Endothelial cell of umbilical vein (primary cell): ENCODE measurements at regions of chr16 and their contacts with region 1.

Region 1: DNA sequence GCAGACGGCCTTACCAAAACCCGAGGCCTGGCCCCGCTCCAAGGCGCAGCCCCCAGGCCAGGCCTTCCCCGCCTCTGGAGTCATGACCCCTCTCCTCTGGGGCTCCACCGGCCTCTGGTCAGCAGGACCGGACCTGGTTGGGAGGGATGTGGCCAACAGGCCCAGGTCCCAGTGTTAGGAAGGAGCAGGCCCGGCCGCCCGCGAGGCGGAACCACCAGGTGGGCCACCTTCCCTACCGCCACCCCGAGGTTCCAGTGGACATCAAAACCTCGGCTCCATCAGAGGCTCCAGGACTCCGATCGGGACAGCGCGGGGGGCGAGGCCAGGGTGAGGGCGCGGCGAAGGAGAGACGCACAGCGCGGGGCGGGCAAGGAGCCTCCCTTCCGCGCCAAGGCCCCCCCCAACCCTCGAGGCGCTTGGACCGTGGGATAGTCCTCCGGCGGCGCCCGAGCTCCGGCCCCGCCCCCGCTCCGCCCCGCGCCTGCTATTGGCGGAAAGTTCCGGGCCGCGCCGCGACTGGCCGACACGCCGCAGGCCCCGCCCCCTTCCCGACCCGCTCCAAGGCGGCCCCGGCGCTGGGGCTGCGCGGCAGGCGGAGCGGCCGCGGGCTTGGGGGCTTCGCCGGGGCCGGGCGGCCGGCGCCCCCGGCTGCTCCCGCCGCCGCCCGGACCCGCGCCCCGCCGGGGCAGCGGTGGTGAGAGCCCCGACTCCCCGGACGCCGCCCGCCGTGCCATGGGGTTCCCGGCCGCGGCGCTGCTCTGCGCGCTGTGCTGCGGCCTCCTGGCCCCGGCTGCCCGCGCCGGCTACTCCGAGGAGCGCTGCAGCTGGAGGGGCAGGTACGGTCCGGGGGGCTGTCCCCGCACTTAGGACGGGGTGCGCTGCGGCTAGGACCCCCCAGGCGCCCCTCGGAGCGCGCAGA is at the start of gene METRN:
- DNase-seq: peak; percentile 78
- H3K4me3 ChIP-seq: peak within 1 kb of the TSS; percentile 42 to 58 (median 51)
- H3K27ac ChIP-seq: no peak within 1 kb of the TSS
- H3K4me1 ChIP-seq: peaks cover 10% of the 10 kb centered on the region
- H3K27me3 ChIP-seq: no peaks in the 10 kb centered on the region
- CTCF ChIP-seq: no peak
- POLR2A ChIP-seq: no peak
- total RNA-seq, gene METRN: 14.1 and 16.1 TPM in 2 replicates

Region 2: GRCh38 chr16:621528-622105 is 93.2 kb before region 1 on chr16:
- CTCF ChIA-PET with region 1: no interaction called
- POLR2A ChIA-PET with region 1: no interaction called
- dilution Hi-C with region 1: no loop called
- intact Hi-C with region 1: no loop called
- DNase-seq: no peak
- H3K4me3 ChIP-seq: no peak overlapping the region
- H3K27ac ChIP-seq: no peak overlapping the region
- H3K4me1 ChIP-seq: peaks cover 3% of the 10 kb centered on the region
- H3K27me3 ChIP-seq: no peaks in the 10 kb centered on the region
- CTCF ChIP-seq: no peak
- POLR2A ChIP-seq: no peak

Region 3: GRCh38 chr16:703406-703805 is 11.4 kb before region 1 on chr16:
- CTCF ChIA-PET with region 1: interaction called, 10 read pairs
- POLR2A ChIA-PET with region 1: no interaction called
- dilution Hi-C with region 1: no loop called
- intact Hi-C with region 1: no loop called
- DNase-seq: no peak
- H3K4me3 ChIP-seq: no peak overlapping the region
- H3K27ac ChIP-seq: no peak overlapping the region
- H3K4me1 ChIP-seq: no peaks in the 10 kb centered on the region
- H3K27me3 ChIP-seq: peaks cover 39 to 44% of the 10 kb centered on the region in 2 experiments
- CTCF ChIP-seq: no peak
- POLR2A ChIP-seq: no peak

Region 4: DNA sequence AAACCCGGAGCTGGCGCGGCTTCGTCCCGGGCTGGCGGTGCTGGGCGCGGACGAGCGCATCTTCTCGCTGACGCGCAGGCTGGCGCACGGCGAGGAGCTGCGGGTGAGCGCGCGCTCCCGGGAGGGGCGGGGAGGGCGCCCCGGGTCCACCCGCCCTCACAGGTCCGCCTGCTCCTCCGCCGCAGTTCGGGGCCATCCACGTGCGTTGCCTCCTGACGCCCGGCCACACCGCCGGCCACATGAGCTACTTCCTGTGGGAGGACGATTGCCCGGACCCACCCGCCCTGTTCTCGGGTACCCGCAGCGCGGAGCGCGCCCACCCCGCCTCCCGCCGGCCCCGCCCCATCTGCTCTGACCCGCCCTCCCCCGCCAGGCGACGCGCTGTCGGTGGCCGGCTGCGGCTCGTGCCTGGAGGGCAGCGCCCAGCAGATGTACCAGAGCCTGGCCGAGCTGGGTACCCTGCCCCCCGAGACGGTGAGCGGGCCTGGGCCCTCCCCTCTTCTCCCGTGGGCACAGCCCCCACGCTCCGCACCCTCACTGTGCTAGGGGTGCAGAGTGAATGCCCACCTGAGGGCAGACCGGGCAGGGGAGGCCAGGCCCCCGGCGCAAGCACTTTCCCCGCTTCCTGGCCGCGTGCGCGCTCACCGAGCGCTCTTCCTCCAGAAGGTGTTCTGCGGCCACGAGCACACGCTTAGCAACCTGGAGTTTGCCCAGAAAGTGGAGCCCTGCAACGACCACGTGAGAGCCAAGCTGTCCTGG is 13.5 kb after region 1 on chr16:
- CTCF ChIA-PET with region 1: interaction called, 34 read pairs
- POLR2A ChIA-PET with region 1: no interaction called
- dilution Hi-C with region 1: no loop called
- intact Hi-C with region 1: loop called (anchors 2 kb)
- DNase-seq: peak; percentile 55
- H3K4me3 ChIP-seq: peak overlapping the region in 2 of 3 experiments; percentile 19 to 44
- H3K27ac ChIP-seq: no peak overlapping the region
- H3K4me1 ChIP-seq: peaks cover 13% of the 10 kb centered on the region
- H3K27me3 ChIP-seq: no peaks in the 10 kb centered on the region
- CTCF ChIP-seq: no peak
- POLR2A ChIP-seq: peak; percentile 17

Region 5: DNA sequence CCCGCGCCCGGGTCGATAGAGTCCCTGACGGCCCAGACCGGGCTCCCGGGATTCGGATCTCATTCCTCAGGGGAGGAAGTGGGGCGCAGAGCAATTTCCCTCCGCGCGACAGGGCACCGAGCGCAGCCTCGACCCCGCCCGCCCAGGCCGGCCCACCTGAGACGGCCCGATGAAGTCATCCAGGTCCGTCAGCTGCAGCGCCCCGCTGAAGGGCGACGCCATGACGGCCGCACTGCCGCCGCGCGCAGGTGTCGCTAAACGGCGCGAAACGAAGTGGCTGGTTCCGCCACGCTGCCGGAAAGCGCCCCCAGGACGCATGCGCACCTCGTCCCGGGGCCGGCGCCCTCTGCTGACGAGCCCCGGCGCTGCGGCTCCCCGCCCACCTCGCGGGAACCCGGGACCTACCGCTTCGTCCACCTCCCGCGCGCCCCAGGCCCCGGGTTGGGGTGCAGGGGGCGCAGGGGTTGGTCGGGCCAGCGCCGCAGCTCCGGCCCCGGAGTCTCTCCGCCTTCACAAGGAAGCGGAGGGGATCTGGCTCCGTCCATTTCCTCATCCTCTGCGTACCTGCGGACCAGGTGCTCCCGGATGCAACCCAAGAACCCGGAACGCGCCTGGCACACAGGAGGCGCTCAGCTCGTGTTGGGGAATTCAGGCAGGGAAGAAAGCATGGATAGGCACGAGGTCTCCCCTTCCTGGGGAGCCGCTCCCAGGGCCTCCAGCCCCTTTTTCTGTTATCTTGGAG is 26.1 kb after region 1 on chr16 and contains the start of gene CIAO3:
- CTCF ChIA-PET with region 1: interaction called, 7 read pairs
- POLR2A ChIA-PET with region 1: no interaction called
- dilution Hi-C with region 1: no loop called
- intact Hi-C with region 1: loop called (anchors 1 kb)
- DNase-seq: peak; percentile 86
- H3K4me3 ChIP-seq: peak within 1 kb of the TSS; percentile 48 to 82 (median 70)
- H3K27ac ChIP-seq: peak within 1 kb of the TSS; percentile 27
- H3K4me1 ChIP-seq: peaks cover 10% of the 10 kb centered on the region
- H3K27me3 ChIP-seq: no peaks in the 10 kb centered on the region
- CTCF ChIP-seq: peak; percentile 89 to 93
- POLR2A ChIP-seq: peak; percentile 89
- total RNA-seq, gene CIAO3: 31.2 and 33.8 TPM in 2 replicates

Region 6: DNA sequence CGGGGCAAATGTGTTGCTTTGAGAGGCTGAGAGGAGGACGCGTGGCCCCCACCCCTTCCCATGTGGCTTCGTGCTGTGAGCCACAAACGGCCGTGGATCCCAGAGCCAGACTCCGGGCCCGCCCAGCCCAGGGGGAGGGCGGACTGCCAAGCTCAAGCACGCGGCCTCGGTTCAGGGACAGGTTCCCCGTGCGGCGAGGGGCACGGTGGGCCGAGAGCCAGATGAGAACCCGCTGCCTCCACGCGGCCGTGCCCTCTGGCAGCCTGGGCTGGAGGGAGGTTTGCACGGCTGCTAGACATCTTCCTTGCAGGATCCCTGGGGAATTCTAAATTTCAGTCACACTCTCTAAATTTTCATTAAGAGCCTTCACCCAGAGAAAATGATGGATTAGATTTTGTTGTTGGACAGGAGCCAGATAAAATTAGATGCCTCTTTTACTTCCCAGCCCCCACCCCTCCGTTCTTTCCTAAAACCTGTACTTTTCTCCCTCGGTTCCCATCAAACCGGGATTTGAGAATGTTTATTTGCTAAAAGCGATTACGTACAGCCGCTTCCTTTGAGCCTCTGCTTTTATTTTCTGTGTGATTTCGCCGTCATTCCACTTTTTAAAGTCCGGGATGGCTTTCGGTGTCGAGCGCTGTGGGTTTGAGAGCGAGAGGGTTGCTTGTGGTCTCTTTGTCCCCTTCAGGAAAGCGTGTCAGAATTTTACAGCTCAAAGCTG is 110.7 kb after region 1 on chr16:
- CTCF ChIA-PET with region 1: no interaction called
- POLR2A ChIA-PET with region 1: no interaction called
- dilution Hi-C with region 1: no loop called
- intact Hi-C with region 1: no loop called
- DNase-seq: no peak
- H3K4me3 ChIP-seq: no peak overlapping the region
- H3K27ac ChIP-seq: no peak overlapping the region
- H3K4me1 ChIP-seq: no peaks in the 10 kb centered on the region
- H3K27me3 ChIP-seq: no peaks in the 10 kb centered on the region
- CTCF ChIP-seq: no peak
- POLR2A ChIP-seq: no peak